ENCODE measurements at regions of chr12 and their contacts with region 1.

Region 1: DNA sequence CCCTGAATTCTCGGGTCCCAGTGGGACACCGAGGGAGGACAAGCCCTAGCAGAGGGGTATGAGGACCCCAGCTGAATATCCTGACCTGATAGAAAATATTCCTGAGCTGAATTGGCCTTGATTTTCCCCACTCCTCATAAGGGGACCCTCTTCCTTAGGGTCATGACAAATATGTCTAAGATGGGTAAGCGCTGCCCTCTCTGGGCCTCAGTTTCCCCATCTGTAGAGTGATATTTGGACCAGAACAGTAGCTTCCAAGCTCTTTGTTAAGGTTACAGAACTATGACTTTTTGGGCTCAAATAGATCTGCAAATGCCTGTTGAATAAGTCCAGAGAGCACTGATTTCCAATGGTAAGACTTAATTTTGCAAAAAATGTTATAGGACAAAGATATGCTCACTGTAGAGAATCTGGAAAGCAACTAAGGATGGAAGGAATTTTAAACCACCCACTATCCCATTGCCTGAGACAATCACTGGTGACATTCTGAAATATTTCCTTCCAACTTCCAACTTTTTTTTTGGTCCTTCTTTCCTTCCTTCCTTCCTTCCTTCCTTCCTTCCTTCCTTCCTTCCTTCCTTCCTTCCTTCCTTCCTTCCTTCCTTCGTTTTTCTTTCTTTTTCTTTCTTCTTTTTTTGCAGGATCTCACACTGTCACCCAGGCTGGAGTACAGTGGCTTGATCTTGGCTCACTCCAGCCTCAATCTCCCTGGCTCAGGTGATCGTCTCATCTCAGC is 32.0 kb downstream of the MYL2 start:
- DNase-seq: no peak
- ATAC-seq: no peak
- H3K4me3 ChIP-seq: no peak overlapping the region
- H3K27ac ChIP-seq: no peak overlapping the region
- H3K4me1 ChIP-seq: no peaks in the 10 kb centered on the region
- H3K27me3 ChIP-seq: peaks cover 2 to 6% of the 10 kb centered on the region in 2 experiments; a peak in 3 of 5 replicates
- CTCF ChIP-seq: no peak
- EP300 ChIP-seq: no peak
- POLR2A ChIP-seq: no peak
- RAD21 ChIP-seq: no peak

Region 2: GRCh38 chr12:110613771-110614684 is 274.4 kb before region 1 on chr12 and contains the start of gene TCTN1:
- CTCF ChIA-PET with region 1: no interaction called
- POLR2A ChIA-PET with region 1: no interaction called
- in situ Hi-C with region 1: no loop called
- intact Hi-C with region 1: loop called (anchors 5 kb)
- DNase-seq: peak; percentile 87
- ATAC-seq: peak; percentile 98
- H3K4me3 ChIP-seq: peak within 1 kb of the TSS; percentile 78 to 82 (median 78)
- H3K27ac ChIP-seq: peak within 1 kb of the TSS; percentile 49
- H3K4me1 ChIP-seq: peaks cover 10% of the 10 kb centered on the region
- H3K27me3 ChIP-seq: no peaks in the 10 kb centered on the region; a peak in 1 of 5 replicates
- CTCF ChIP-seq: peak; percentile 50
- EP300 ChIP-seq: no peak
- POLR2A ChIP-seq: peak; percentile 44 to 87; a peak in 3 of 4 replicates
- RAD21 ChIP-seq: no peak
- total RNA-seq, gene TCTN1: 8.9 and 16.0 TPM in 2 replicates

Region 3: GRCh38 chr12:110698171-110698902 is 190.1 kb before region 1 on chr12:
- CTCF ChIA-PET with region 1: interaction called, 3 read pairs
- POLR2A ChIA-PET with region 1: no interaction called
- in situ Hi-C with region 1: no loop called
- intact Hi-C with region 1: loop called (anchors 5 kb)
- DNase-seq: peak; percentile 81
- ATAC-seq: peak; percentile 95
- H3K4me3 ChIP-seq: peak overlapping the region; percentile 20 to 74 (median 54); a peak in 5 of 6 replicates
- H3K27ac ChIP-seq: no peak overlapping the region
- H3K4me1 ChIP-seq: peaks cover 24% of the 10 kb centered on the region
- H3K27me3 ChIP-seq: peaks cover 2 to 21% of the 10 kb centered on the region in 2 experiments; a peak in 3 of 5 replicates
- CTCF ChIP-seq: peak; percentile 84
- EP300 ChIP-seq: peak in 1 of 2 experiments; percentile 26; a peak in 1 of 4 replicates
- POLR2A ChIP-seq: 0 out of 4 replicates have a peak, but pooled peaks of 1 of the 2 experiments have one; percentile 22
- RAD21 ChIP-seq: peak; percentile 58; the same call in 1 of the 2 replicates